ENCODE measurements at regions of chr16 and their contacts with region 1.

Region 1: DNA sequence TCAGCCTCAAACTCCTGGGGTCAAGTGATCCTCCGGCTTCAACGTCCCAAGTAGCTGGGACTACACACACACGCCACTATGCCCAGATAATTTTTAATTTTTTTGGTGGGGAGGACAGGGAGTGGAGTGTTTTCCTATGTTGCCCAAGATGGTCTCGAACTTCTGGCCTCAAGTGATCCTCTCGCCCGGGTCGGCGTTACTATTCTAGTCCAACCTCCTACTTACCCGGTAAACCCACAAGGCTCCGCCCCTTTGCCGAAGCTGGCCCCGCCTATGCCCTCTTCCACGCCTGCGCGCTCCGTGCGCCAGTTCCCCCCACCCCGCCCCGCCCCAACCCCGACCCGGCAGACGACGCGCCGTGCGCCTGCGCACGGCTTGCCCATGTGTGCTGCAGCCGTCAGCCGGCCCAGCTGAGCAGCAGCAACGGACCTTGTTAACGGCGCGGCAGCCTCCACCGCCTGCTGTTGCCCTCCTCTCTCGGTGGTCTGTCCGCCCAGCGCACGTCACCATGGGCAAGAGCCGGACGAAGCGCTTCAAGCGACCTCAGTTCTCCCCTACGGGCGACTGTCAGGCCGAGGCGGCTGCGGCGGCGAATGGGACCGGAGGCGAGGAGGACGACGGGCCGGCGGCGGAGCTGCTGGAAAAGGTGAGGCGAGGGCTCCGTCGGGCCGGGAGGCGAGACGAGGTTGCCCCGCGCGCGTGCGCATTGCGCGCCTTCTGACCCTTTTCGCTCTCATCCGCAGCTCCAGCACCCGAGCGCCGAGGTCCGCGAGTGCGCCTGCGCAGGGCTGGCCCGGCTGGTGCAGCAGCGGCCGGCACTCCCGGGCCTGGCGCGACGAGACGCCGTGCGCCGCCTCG is at the start of gene HEATR3:
- DNase-seq: peak; percentile 93 to 95
- ATAC-seq: peak; percentile 89 to 97
- H3K4me3 ChIP-seq: peak within 1 kb of the TSS; percentile 90
- H3K27ac ChIP-seq: peak within 1 kb of the TSS; percentile 96 to 98
- H3K4me1 ChIP-seq: peaks cover 16% of the 10 kb centered on the region
- CTCF ChIP-seq: no peak
- EP300 ChIP-seq: no peak
- POLR2A ChIP-seq: peak; percentile 90
- RAD21 ChIP-seq: no peak
- polyA plus RNA-seq, gene HEATR3: 28.2 and 30.8 TPM in 2 replicates

Region 2: GRCh38 chr16:49821614-49822282 is 244.1 kb before region 1 on chr16:
- CTCF ChIA-PET with region 1: no interaction called
- POLR2A ChIA-PET with region 1: no interaction called
- DNase-seq: no peak
- ATAC-seq: no peak
- H3K4me3 ChIP-seq: no peak overlapping the region
- H3K27ac ChIP-seq: no peak overlapping the region
- H3K4me1 ChIP-seq: no peaks in the 10 kb centered on the region
- CTCF ChIP-seq: no peak
- EP300 ChIP-seq: no peak
- POLR2A ChIP-seq: no peak
- RAD21 ChIP-seq: no peak

Region 3: DNA sequence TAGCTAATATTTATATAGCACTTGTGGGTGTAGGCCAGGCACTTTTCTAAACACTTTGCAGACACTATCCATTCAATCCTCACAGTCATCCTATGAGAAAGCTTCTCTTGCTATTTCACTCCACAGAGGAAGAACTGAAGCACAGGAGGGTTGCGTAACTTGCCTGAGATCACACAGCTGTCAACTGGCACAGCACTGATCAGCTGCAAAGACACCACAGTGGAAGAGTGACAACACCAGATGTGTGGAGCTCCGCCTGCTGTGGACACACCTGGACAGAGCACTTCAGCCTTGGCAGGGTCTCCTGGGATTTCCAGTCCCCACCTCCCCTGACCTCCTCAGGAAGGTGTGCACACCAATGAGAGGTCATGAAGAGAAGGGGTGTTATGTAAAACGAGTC is 54.1 kb before region 1 on chr16:
- CTCF ChIA-PET with region 1: no interaction called
- POLR2A ChIA-PET with region 1: no interaction called
- DNase-seq: no peak
- ATAC-seq: no peak
- H3K4me3 ChIP-seq: no peak overlapping the region
- H3K27ac ChIP-seq: no peak overlapping the region
- H3K4me1 ChIP-seq: no peaks in the 10 kb centered on the region
- CTCF ChIP-seq: no peak
- EP300 ChIP-seq: no peak
- POLR2A ChIP-seq: no peak
- RAD21 ChIP-seq: no peak

Region 4: GRCh38 chr16:50079397-50080140 is 13.7 kb after region 1 on chr16:
- CTCF ChIA-PET with region 1: interaction called, 11 read pairs
- POLR2A ChIA-PET with region 1: no interaction called
- DNase-seq: no peak
- ATAC-seq: no peak
- H3K4me3 ChIP-seq: no peak overlapping the region
- H3K27ac ChIP-seq: no peak overlapping the region
- H3K4me1 ChIP-seq: no peaks in the 10 kb centered on the region
- CTCF ChIP-seq: no peak
- EP300 ChIP-seq: no peak
- POLR2A ChIP-seq: no peak
- RAD21 ChIP-seq: no peak

Region 5: GRCh38 chr16:50129393-50129792 is 63.5 kb after region 1 on chr16:
- CTCF ChIA-PET with region 1: no interaction called
- POLR2A ChIA-PET with region 1: no interaction called
- DNase-seq: no peak
- ATAC-seq: no peak
- H3K4me3 ChIP-seq: no peak overlapping the region
- H3K27ac ChIP-seq: no peak overlapping the region
- H3K4me1 ChIP-seq: no peaks in the 10 kb centered on the region
- CTCF ChIP-seq: no peak
- EP300 ChIP-seq: no peak
- POLR2A ChIP-seq: no peak
- RAD21 ChIP-seq: no peak

Region 6: DNA sequence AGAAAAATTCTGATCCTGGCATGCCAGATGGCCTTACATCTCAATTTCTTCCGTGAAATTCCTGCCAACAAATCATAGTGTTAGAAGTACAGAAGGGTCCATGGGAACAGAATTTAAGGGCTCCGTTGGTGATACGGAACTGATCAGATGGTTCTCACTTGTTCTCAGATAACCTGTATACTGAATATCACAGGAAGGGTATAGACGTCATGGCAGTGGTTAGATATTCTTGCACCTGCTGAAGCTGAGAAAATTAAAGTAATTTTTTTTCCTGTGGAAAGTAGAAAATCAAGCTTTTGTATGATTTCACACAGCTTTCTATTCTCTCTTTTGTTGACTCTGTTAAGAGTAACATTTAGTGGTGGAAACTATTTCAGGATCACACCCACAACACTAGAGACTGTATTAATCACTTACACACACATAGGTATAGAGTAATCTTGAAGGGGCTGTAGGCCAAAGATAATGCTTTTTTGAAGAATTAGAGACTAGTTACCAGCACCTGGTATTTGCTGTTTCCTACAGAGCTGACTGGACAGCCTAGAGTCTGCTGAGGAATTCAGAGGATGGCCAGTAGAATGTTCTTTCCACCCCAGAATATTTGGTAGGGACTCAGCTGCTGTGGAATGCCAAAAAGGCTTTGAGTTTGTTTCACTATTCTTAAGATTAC is 94.8 kb after region 1 on chr16:
- CTCF ChIA-PET with region 1: no interaction called
- POLR2A ChIA-PET with region 1: no interaction called
- DNase-seq: no peak
- ATAC-seq: no peak
- H3K4me3 ChIP-seq: no peak overlapping the region
- H3K27ac ChIP-seq: no peak overlapping the region
- H3K4me1 ChIP-seq: peaks cover 22% of the 10 kb centered on the region
- CTCF ChIP-seq: no peak
- EP300 ChIP-seq: no peak
- POLR2A ChIP-seq: no peak
- RAD21 ChIP-seq: no peak